Aorta (tissue), 5 donors: ENCODE measurements at regions of chr2 and their contacts with region 1.

Region 1: GRCh38 chr2:237627441-237628246 is at the start of gene LRRFIP1:
- DNase-seq: peak in 1 of 2 donors; percentile 84
- ATAC-seq: peak; percentile 78
- H3K4me3 ChIP-seq: peak within 1 kb of the TSS; percentile 77 to 91
- H3K27ac ChIP-seq: peak within 1 kb of the TSS; percentile 78 to 89
- H3K4me1 ChIP-seq: peaks cover under 1 to 4% of the 10 kb centered on the region in 2 donors
- H3K27me3 ChIP-seq: no peaks in the 10 kb centered on the region
- total RNA-seq, gene LRRFIP1: 234 to 348 TPM

Region 2: GRCh38 chr2:237662671-237663093 is 35.0 kb after region 1 on chr2:
- intact Hi-C with region 1: loop called in 1 of 2 experiments (anchors 5 kb)
- DNase-seq: peak; percentile 96 to 97
- ATAC-seq: peak; percentile 91
- H3K4me3 ChIP-seq: no peak overlapping the region
- H3K27ac ChIP-seq: peak overlapping the region; percentile 63 to 64
- H3K4me1 ChIP-seq: no peaks in the 10 kb centered on the region
- H3K27me3 ChIP-seq: no peaks in the 10 kb centered on the region